ENCODE measurements at regions of chr3 and their contacts with region 1.

Region 1: GRCh38 chr3:157201648-157202278 is 41.8 kb upstream of the CCNL1 start:
- DNase-seq: no peak
- ATAC-seq: no peak
- H3K4me3 Mint-ChIP-seq: no peak overlapping the region
- H3K27ac Mint-ChIP-seq: no peak overlapping the region
- H3K4me1 Mint-ChIP-seq: no peaks in the 10 kb centered on the region
- H3K27me3 Mint-ChIP-seq: no peaks in the 10 kb centered on the region

Region 2: GRCh38 chr3:156826144-156826895 is 375.4 kb before region 1 on chr3 and contains the start of gene LEKR1:
- CTCF ChIA-PET with region 1: no interaction called
- POLR2A ChIA-PET with region 1: no interaction called
- intact Hi-C with region 1: no loop called
- DNase-seq: peak; percentile 76
- ATAC-seq: peak; percentile 77
- H3K4me3 Mint-ChIP-seq: peak within 1 kb of the TSS; percentile 82
- H3K27ac Mint-ChIP-seq: peak within 1 kb of the TSS; percentile 95
- H3K4me1 Mint-ChIP-seq: peaks cover 17% of the 10 kb centered on the region
- H3K27me3 Mint-ChIP-seq: no peaks in the 10 kb centered on the region
- total RNA-seq, gene LEKR1: 0.37 to 0.53 TPM

Region 3: DNA sequence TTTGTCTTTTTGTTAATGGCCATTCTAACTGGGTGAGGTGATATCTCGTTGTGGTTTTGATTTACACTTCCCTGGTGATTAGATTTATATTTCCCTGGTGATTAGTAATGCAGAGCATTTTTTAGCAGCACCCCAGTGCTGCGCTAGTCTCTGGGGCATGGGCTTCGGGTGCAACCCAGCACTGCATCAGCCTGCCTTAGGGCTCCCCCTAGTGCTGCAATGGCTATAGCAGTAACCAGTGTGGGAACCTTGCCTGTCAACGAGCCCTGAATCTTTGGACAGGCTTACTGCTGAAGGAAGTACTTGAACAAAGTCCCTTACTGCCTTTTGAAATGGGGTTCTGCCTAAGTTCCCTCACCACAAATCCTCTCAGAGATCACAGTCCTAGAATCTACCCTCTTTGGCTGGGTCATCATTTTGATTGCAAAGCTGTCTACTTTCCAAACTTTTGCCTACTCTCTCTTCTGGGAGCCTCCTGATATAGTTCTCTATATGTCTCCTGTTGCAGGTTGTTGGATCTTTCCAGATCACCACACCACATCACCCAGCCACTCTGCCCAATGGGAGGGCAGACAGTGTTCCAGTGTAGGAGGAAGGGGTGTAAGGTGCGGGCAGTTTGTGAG is 37.4 kb after region 1 on chr3:
- CTCF ChIA-PET with region 1: interaction called, 6 read pairs
- POLR2A ChIA-PET with region 1: no interaction called
- intact Hi-C with region 1: loop called (anchors 1 kb)
- DNase-seq: peak; percentile 88
- ATAC-seq: peak; percentile 100
- H3K4me3 Mint-ChIP-seq: no peak overlapping the region
- H3K27ac Mint-ChIP-seq: no peak overlapping the region
- H3K4me1 Mint-ChIP-seq: peaks cover 3% of the 10 kb centered on the region
- H3K27me3 Mint-ChIP-seq: no peaks in the 10 kb centered on the region

Region 4: GRCh38 chr3:157493627-157494550 is 292.1 kb after region 1 on chr3:
- CTCF ChIA-PET with region 1: interaction called, 3 read pairs
- POLR2A ChIA-PET with region 1: no interaction called
- intact Hi-C with region 1: loop called (anchors 5 to 10 kb)
- DNase-seq: no peak
- ATAC-seq: no peak
- H3K4me3 Mint-ChIP-seq: no peak overlapping the region
- H3K27ac Mint-ChIP-seq: no peak overlapping the region
- H3K4me1 Mint-ChIP-seq: no peaks in the 10 kb centered on the region
- H3K27me3 Mint-ChIP-seq: peaks cover 26% of the 10 kb centered on the region

Measured in activated CD4-positive, alpha-beta T cell treated with anti-CD3 and anti-CD28 coated beads for 36 hours (primary cell).